Common myeloid progenitor, CD34-positive (primary cell): ENCODE measurements at regions of chr4 and their contacts with region 1.

Region 1: GRCh38 chr4:53929955-53930798 is 134.2 kb downstream of the CHIC2 start:
- DNase-seq: peak; percentile 78 to 85 (median 79)
- H3K4me3 ChIP-seq: no peak overlapping the region
- H3K27ac ChIP-seq: no peak overlapping the region
- H3K4me1 ChIP-seq: peaks cover 0 to 3% (median 0%) of the 10 kb centered on the region in 4 experiments
- H3K27me3 ChIP-seq: peaks cover 0 to 2% (median 0%) of the 10 kb centered on the region in 5 experiments

Region 2: GRCh38 chr4:53908661-53909078 is 21.5 kb before region 1 on chr4:
- CTCF ChIA-PET with region 1: interaction called, 32 read pairs
- POLR2A ChIA-PET with region 1: no interaction called
- DNase-seq: peak; percentile 82 to 87 (median 86)
- H3K4me3 ChIP-seq: peak overlapping the region in 5 of 7 experiments; percentile 21 to 73 (median 41)
- H3K27ac ChIP-seq: no peak overlapping the region
- H3K4me1 ChIP-seq: peaks cover 7 to 29% (median 9%) of the 10 kb centered on the region in 4 experiments
- H3K27me3 ChIP-seq: peaks cover 0 to 16% (median 5%) of the 10 kb centered on the region in 5 experiments

Region 3: GRCh38 chr4:53920116-53920515 is 10.1 kb before region 1 on chr4:
- CTCF ChIA-PET with region 1: interaction called, 52 read pairs
- POLR2A ChIA-PET with region 1: interaction called, 3 read pairs
- DNase-seq: peak in 2 of 3 donors; percentile 31 to 41
- H3K4me3 ChIP-seq: no peak overlapping the region
- H3K27ac ChIP-seq: no peak overlapping the region
- H3K4me1 ChIP-seq: peaks cover 0 to 7% (median 2%) of the 10 kb centered on the region in 4 experiments
- H3K27me3 ChIP-seq: peaks cover 0 to 1% (median 0%) of the 10 kb centered on the region in 5 experiments

Region 4: DNA sequence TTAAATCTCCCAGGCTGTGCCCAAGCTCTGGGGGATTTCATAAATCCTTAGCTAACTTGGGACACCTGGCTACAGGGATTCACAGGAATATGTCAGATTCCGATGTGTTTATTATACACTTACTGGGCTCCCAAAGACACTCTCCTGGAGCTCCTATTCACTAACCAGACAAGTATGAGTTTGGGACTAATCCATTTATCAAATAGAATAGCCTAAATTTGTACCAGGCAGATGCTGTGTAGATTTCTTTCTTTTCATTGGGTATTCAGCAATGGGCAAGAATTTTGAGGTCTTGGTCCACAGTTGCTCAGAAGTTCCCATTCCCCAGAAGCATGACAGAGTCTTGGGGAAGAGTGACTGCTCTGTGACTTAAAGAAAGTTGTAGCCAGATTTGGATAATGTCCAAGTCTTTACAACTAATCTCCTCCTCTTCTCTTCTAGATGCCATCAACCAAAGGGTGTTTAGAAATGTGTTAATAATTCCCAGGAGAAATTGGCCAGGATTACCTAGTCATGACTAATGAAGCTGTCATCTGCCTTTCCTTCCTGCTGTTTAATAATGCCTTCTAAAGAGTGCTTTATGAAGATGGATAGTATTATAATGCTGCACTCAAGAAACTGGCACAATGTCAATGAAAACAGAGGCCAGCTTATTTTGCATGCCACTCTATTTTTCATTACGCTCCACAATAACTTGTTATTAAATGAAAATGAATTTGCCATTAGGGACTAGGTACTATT is 13.3 kb after region 1 on chr4:
- CTCF ChIA-PET with region 1: interaction called, 14 read pairs
- POLR2A ChIA-PET with region 1: interaction called, 3 read pairs
- DNase-seq: no peak
- H3K4me3 ChIP-seq: no peak overlapping the region
- H3K27ac ChIP-seq: no peak overlapping the region
- H3K4me1 ChIP-seq: no peaks in the 10 kb centered on the region
- H3K27me3 ChIP-seq: no peaks in the 10 kb centered on the region

Region 5: GRCh38 chr4:54176202-54176601 is 246.0 kb after region 1 on chr4:
- CTCF ChIA-PET with region 1: no interaction called
- POLR2A ChIA-PET with region 1: no interaction called
- DNase-seq: no peak
- H3K4me3 ChIP-seq: no peak overlapping the region
- H3K27ac ChIP-seq: no peak overlapping the region
- H3K4me1 ChIP-seq: peaks cover 0 to 7% (median 2%) of the 10 kb centered on the region in 4 experiments
- H3K27me3 ChIP-seq: no peaks in the 10 kb centered on the region

Region 6: GRCh38 chr4:54217642-54218495 is 287.7 kb after region 1 on chr4:
- CTCF ChIA-PET with region 1: interaction called, 121 read pairs
- POLR2A ChIA-PET with region 1: no interaction called
- DNase-seq: peak; percentile 75 to 85 (median 78)
- H3K4me3 ChIP-seq: peak overlapping the region; percentile 31 to 74 (median 55)
- H3K27ac ChIP-seq: no peak overlapping the region
- H3K4me1 ChIP-seq: peaks cover 0 to 7% (median 6%) of the 10 kb centered on the region in 4 experiments
- H3K27me3 ChIP-seq: peaks cover 6 to 23% (median 8%) of the 10 kb centered on the region in 5 experiments

Region 7: DNA sequence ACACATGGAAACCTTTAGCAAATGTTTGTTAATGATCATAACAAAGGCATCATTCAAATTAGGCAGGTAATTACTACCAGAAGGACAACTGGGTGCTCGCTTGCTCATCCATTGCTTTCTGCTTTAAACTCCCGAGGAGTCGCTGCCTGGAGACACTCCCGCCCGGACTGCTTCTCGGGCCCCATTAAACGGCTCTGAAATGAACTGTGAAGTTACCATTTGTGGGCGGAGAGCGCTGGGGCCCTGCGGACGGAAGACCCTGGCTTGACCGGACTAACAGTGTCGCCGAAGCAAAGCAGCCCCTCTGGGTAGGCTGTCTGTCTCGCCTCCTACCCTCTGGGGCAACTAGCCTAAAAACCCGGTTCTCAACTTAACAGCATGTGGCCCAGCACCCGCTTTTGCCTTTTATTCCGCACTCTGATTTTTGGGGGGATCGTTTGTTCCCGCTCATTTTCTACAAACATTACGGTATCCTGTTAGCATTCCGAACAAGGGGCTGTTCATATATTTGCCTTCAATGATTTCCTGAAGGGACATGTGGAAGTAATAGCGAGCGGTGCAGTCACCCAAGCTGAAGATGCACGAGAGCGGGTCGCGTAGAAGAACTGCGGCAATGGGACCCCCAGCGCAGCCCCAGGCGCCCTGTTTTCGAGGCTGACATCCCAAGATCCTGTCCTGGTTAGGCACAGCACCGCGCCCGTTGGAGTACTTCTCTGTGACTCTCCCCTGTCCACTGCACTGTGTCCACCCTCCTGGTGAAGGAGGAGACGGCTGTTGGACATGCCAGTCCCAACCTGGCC is 297.3 kb after region 1 on chr4:
- CTCF ChIA-PET with region 1: interaction called, 61 read pairs
- POLR2A ChIA-PET with region 1: no interaction called
- DNase-seq: peak in 2 of 3 donors; percentile 23 to 39
- H3K4me3 ChIP-seq: peak overlapping the region in 6 of 7 experiments; percentile 24 to 76 (median 54)
- H3K27ac ChIP-seq: no peak overlapping the region
- H3K4me1 ChIP-seq: peaks cover 0 to 66% (median 49%) of the 10 kb centered on the region in 4 experiments
- H3K27me3 ChIP-seq: peaks cover 0 to 100% (median 65%) of the 10 kb centered on the region in 5 experiments